ENCODE measurements at regions of chr1 and their contacts with region 1.

Region 1: GRCh38 chr1:90721210-90722194 is 4.4 kb upstream of the BARHL2 start:
- DNase-seq: peak in 1 of 5 donors; percentile 77
- ATAC-seq: no peak
- H3K4me3 ChIP-seq: no peak overlapping the region
- H3K27ac ChIP-seq: no peak overlapping the region
- H3K4me1 ChIP-seq: peaks cover 10 to 59% (median 34%) of the 10 kb centered on the region in 12 donors
- H3K27me3 ChIP-seq: peaks cover 76 to 100% (median 94%) of the 10 kb centered on the region in 9 donors
- CTCF ChIP-seq: peak; percentile 51 to 81 (median 70)
- POLR2A ChIP-seq: no peak

Region 2: DNA sequence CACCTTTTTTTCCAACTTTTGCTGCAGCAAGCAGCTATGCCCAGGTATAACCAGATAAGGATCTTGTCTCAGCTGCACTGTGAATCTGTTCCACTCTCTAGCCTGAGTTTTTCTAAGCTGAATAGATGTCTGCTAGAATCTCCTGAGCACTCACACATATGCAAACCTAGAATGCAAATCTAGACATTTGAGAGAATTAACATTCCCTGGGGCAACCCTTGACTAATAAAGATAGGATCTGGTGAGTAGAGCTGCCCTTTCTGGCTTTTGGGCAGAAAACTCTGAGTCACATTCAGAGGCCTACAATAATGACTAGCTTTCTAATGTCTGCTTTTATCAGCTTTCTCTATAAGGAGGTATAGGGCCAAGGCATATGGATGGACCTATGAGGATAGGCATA is 57.0 kb after region 1 on chr1:
- intact Hi-C with region 1: no loop called
- DNase-seq: no peak
- ATAC-seq: no peak
- H3K4me3 ChIP-seq: no peak overlapping the region
- H3K27ac ChIP-seq: no peak overlapping the region
- H3K4me1 ChIP-seq: no peaks in the 10 kb centered on the region
- H3K27me3 ChIP-seq: peaks cover 0 to 12% (median 0%) of the 10 kb centered on the region in 9 donors
- CTCF ChIP-seq: no peak
- POLR2A ChIP-seq: no peak

Region 3: GRCh38 chr1:90834886-90835660 is 113.6 kb after region 1 on chr1:
- intact Hi-C with region 1: loop called in 2 of 10 experiments (anchors 10 kb)
- DNase-seq: no peak
- ATAC-seq: peak in 1 of 4 donors; percentile 31
- H3K4me3 ChIP-seq: peak overlapping the region in 10 of 12 donors; percentile 27 to 58 (median 50)
- H3K27ac ChIP-seq: no peak overlapping the region
- H3K4me1 ChIP-seq: peaks cover 3 to 21% (median 13%) of the 10 kb centered on the region in 12 donors
- H3K27me3 ChIP-seq: peaks cover 4 to 89% (median 34%) of the 10 kb centered on the region in 9 donors
- CTCF ChIP-seq: no peak
- POLR2A ChIP-seq: no peak

Region 4: GRCh38 chr1:90841473-90841872 is 120.0 kb after region 1 on chr1:
- intact Hi-C with region 1: loop called in 2 of 10 experiments (anchors 10 kb)
- DNase-seq: no peak
- ATAC-seq: no peak
- H3K4me3 ChIP-seq: no peak overlapping the region
- H3K27ac ChIP-seq: no peak overlapping the region
- H3K4me1 ChIP-seq: peaks cover 0 to 1% (median under 1%) of the 10 kb centered on the region in 12 donors
- H3K27me3 ChIP-seq: peaks cover 0 to 59% (median 12%) of the 10 kb centered on the region in 9 donors
- CTCF ChIP-seq: no peak
- POLR2A ChIP-seq: no peak

Region 5: GRCh38 chr1:90850898-90851710 is 129.6 kb after region 1 on chr1:
- intact Hi-C with region 1: loop called in 3 of 10 experiments (anchors 10 kb)
- DNase-seq: peak; percentile 83 to 90 (median 85)
- ATAC-seq: peak; percentile 92 to 100 (median 98)
- H3K4me3 ChIP-seq: peak overlapping the region; percentile 57 to 96 (median 83)
- H3K27ac ChIP-seq: peak overlapping the region in 9 of 12 donors; percentile 2 to 76 (median 60)
- H3K4me1 ChIP-seq: peaks cover 0 to 13% (median 0%) of the 10 kb centered on the region in 12 donors
- H3K27me3 ChIP-seq: peaks cover 0 to 10% (median 0%) of the 10 kb centered on the region in 9 donors
- CTCF ChIP-seq: peak; percentile 60 to 94 (median 88)
- POLR2A ChIP-seq: peak in 1 of 2 donors; percentile 41

Region 6: DNA sequence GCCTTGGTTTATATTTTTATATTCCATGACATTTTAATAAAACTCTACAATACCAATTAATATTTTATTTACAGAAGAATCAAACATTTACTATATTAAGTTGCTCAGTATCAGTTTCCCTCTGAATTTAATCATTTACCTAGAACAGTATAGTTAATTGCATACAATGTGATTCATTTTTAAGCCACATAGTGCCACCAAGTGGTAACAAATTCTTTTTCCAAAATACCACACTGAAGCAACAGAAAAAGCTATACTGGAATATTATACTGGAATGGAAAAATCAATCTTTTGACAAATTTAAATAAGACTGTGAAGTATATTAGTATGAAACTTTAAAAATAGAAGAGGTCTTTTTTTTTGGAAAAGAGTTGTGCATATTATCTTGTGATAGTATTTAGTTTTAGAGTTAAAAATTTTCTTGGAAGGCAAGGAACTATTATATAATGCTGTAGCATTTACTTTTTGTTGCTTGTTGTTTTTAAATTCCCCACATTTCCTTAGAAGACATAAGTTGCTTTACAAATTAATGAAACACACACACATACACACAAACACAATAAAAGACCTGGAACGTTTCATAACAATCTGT is 243.0 kb after region 1 on chr1:
- intact Hi-C with region 1: loop called in 9 of 10 experiments (anchors 5 to 10 kb)
- DNase-seq: no peak
- ATAC-seq: peak in 1 of 4 donors; percentile 38
- H3K4me3 ChIP-seq: no peak overlapping the region
- H3K27ac ChIP-seq: no peak overlapping the region
- H3K4me1 ChIP-seq: peaks cover 0 to 13% (median 7%) of the 10 kb centered on the region in 12 donors
- H3K27me3 ChIP-seq: no peaks in the 10 kb centered on the region
- CTCF ChIP-seq: peak in 11 of 12 donors; percentile 19 to 60 (median 48)
- POLR2A ChIP-seq: no peak

Region 7: DNA sequence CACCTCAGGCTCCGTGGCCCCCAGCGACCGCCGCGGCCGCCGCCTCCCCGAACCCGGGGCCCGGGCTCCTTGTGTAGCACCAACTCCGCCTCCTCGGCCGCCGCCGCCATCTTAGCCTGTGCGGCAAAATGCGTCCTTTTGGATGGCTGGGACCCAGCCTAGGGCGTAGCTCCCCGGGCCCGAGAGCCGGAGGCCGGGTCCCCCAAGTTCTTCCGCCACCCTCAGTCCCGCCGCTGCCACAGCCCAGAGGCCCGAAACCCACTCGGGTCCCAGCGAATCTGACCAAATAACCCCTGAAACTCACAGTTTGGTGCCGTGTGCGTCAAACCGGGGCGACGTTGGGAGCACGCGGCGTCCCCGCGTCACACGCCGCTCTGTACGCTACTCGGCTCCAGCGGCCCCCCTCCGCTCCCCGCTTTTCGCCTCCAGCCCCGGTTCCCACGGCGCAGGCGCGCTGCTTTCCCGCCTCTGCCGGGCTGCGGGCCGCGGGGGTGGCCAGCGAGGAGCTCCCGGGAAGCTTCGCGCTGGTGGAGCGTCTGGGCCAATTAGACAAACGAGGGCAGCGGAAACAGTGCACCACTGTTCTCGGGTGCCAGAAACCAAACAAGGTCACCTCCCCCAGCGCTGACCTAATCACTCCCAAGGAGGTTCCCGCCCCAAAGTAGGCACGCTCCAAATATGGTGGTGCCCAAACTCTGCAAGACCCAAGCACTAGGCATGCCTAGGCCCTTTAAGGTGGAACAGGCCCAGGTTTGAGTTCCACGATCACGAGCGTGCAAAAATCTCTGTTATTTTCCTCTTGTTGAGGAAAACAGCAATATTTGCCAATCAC is 300.4 kb after region 1 on chr1 and contains the start of gene ZNF644:
- intact Hi-C with region 1: loop called in 1 of 10 experiments (anchors 10 kb)
- DNase-seq: peak; percentile 92 to 95 (median 95)
- ATAC-seq: peak; percentile 93 to 97 (median 96)
- H3K4me3 ChIP-seq: peak within 1 kb of the TSS; percentile 66 to 97 (median 88)
- H3K27ac ChIP-seq: peak within 1 kb of the TSS; percentile 95 to 100 (median 100)
- H3K4me1 ChIP-seq: peaks cover 0 to 54% (median 40%) of the 10 kb centered on the region in 12 donors
- H3K27me3 ChIP-seq: no peaks in the 10 kb centered on the region
- CTCF ChIP-seq: no peak
- POLR2A ChIP-seq: peak; percentile 16 to 75
- total RNA-seq, gene ZNF644: 23.1 to 46.6 (median 33.9) TPM

Region 8: GRCh38 chr1:91165033-91165654 is 443.6 kb after region 1 on chr1:
- intact Hi-C with region 1: loop called in 5 of 10 experiments (anchors 5 to 10 kb)
- DNase-seq: peak; percentile 60 to 80 (median 66)
- ATAC-seq: peak; percentile 78 to 96 (median 90)
- H3K4me3 ChIP-seq: no peak overlapping the region
- H3K27ac ChIP-seq: no peak overlapping the region
- H3K4me1 ChIP-seq: no peaks in the 10 kb centered on the region
- H3K27me3 ChIP-seq: peaks cover 0 to 8% (median 0%) of the 10 kb centered on the region in 9 donors
- CTCF ChIP-seq: peak; percentile 79 to 94 (median 87)
- POLR2A ChIP-seq: no peak